Uterus (tissue), 4 donors: ENCODE measurements at regions of chr6 and their contacts with region 1.

Region 1: GRCh38 chr6:151209071-151209831 is 30.5 kb upstream of the AKAP12 start:
- DNase-seq: no peak
- H3K4me3 ChIP-seq: no peak overlapping the region
- H3K27ac ChIP-seq: no peak overlapping the region
- H3K4me1 ChIP-seq: no peaks in the 10 kb centered on the region
- H3K27me3 ChIP-seq: no peaks in the 10 kb centered on the region
- CTCF ChIP-seq: no peak
- POLR2A ChIP-seq: no peak

Region 2: GRCh38 chr6:151566557-151566956 is 357.3 kb after region 1 on chr6:
- intact Hi-C with region 1: loop called (anchors 5 kb)
- DNase-seq: no peak
- H3K4me3 ChIP-seq: no peak overlapping the region
- H3K27ac ChIP-seq: no peak overlapping the region
- H3K4me1 ChIP-seq: no peaks in the 10 kb centered on the region
- H3K27me3 ChIP-seq: no peaks in the 10 kb centered on the region
- CTCF ChIP-seq: no peak
- POLR2A ChIP-seq: no peak